ENCODE measurements at regions of chr16 and their contacts with region 1.

Region 1: DNA sequence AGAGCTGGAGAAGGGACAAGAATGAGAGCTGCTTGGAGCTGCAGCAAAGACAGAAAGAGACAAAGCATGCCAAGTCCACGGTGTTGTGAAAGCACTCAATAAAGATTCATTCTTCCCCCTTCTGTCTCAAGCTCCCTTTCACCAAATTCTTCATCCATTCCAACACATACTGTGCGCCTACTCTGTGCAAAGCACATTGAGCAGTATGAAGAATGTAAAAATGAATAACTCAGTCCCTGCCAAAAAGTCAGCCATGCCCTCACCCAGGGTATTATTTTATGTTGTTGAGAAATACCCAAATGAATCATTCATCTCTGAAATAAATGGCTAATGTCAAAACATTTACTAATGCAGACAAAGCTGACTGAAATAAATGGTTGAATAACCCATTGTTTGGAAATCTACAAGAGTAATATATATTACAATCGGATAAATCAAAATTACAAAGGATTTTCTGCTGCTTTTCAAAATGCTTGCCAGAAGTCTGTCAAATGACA is 282.9 kb upstream of the IRX5 start:
- DNase-seq: peak; percentile 84
- H3K4me3 ChIP-seq: peak overlapping the region in 1 of 3 experiments; percentile 16
- H3K27ac ChIP-seq: peak overlapping the region; percentile 91
- H3K4me1 ChIP-seq: peaks cover 40% of the 10 kb centered on the region
- H3K27me3 ChIP-seq: no peaks in the 10 kb centered on the region
- CTCF ChIP-seq: no peak

Region 2: GRCh38 chr16:54526916-54527315 is 120.9 kb before region 1 on chr16:
- CTCF ChIA-PET with region 1: no interaction called
- dilution Hi-C with region 1: no loop called
- in situ Hi-C with region 1: no loop called
- intact Hi-C with region 1: no loop called
- DNase-seq: peak; percentile 20
- H3K4me3 ChIP-seq: no peak overlapping the region
- H3K27ac ChIP-seq: no peak overlapping the region
- H3K4me1 ChIP-seq: no peaks in the 10 kb centered on the region
- H3K27me3 ChIP-seq: no peaks in the 10 kb centered on the region
- CTCF ChIP-seq: no peak

Region 3: GRCh38 chr16:54812229-54812628 is 164.5 kb after region 1 on chr16:
- CTCF ChIA-PET with region 1: no interaction called
- dilution Hi-C with region 1: no loop called
- in situ Hi-C with region 1: no loop called
- intact Hi-C with region 1: loop called (anchors 5 kb)
- DNase-seq: no peak
- H3K4me3 ChIP-seq: no peak overlapping the region
- H3K27ac ChIP-seq: no peak overlapping the region
- H3K4me1 ChIP-seq: no peaks in the 10 kb centered on the region
- H3K27me3 ChIP-seq: no peaks in the 10 kb centered on the region
- CTCF ChIP-seq: peak in 1 of 2 donors; percentile 53